ENCODE measurements at regions of chr10 and their contacts with region 1.

Region 1: DNA sequence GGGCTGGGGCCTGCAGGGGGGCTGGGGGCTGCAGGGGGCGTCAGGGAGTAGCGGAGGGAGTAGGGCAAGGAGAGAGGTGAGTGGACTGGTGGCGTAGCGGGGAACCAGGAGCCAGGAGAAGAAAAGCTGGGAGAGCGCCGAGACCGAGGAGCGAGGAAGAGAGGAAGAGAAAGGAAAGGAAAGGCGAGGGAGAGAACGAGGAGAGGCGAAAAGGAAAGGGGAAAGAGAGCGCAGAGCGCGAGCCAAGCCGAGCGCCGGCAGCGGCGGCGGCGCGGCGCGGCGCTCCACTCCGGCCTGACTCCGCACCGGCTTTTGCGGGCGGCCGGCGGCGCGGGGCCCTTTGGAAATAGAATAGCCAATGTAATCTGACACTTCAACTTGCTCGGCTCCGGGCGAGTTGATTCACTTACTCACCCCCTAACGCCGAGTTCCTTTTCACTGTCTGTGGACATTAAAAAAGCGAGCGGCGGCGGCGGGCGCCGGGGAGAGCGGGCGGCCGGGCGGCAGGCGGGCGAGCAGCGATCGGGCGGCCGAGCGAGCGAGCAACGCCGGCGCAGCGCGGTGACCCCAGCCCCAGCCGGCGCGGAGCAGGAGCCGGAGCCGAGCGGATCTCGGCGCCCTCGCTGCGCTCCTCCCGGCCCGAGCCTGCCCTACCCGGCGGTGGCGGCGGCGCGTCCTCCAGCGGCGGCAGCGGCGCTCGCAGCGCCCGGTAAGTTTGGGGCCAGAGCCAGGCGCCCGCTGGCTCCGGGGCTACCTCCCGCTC is at the start of gene ZMIZ1:
- DNase-seq: peak; percentile 78
- ATAC-seq: peak; percentile 66
- H3K4me3 Mint-ChIP-seq: peak within 1 kb of the TSS; percentile 89
- H3K27ac Mint-ChIP-seq: peak within 1 kb of the TSS; percentile 75
- H3K4me1 Mint-ChIP-seq: peaks cover 30% of the 10 kb centered on the region
- H3K27me3 Mint-ChIP-seq: peaks cover 21% of the 10 kb centered on the region
- CTCF ChIP-seq: no peak
- total RNA-seq, gene ZMIZ1: 88.2 and 93.9 TPM in 2 replicates

Region 2: GRCh38 chr10:78029269-78030226 is 1039.2 kb before region 1 on chr10 and contains the start of gene POLR3A:
- CTCF ChIA-PET with region 1: no interaction called
- POLR2A ChIA-PET with region 1: no interaction called
- intact Hi-C with region 1: loop called (anchors 2 kb)
- DNase-seq: peak; percentile 85
- ATAC-seq: peak; percentile 57
- H3K4me3 Mint-ChIP-seq: peak within 1 kb of the TSS; percentile 99
- H3K27ac Mint-ChIP-seq: peak within 1 kb of the TSS; percentile 88
- H3K4me1 Mint-ChIP-seq: peaks cover 43% of the 10 kb centered on the region
- H3K27me3 Mint-ChIP-seq: no peaks in the 10 kb centered on the region
- CTCF ChIP-seq: no peak
- total RNA-seq, gene POLR3A: 17.0 and 20.3 TPM in 2 replicates

Region 3: DNA sequence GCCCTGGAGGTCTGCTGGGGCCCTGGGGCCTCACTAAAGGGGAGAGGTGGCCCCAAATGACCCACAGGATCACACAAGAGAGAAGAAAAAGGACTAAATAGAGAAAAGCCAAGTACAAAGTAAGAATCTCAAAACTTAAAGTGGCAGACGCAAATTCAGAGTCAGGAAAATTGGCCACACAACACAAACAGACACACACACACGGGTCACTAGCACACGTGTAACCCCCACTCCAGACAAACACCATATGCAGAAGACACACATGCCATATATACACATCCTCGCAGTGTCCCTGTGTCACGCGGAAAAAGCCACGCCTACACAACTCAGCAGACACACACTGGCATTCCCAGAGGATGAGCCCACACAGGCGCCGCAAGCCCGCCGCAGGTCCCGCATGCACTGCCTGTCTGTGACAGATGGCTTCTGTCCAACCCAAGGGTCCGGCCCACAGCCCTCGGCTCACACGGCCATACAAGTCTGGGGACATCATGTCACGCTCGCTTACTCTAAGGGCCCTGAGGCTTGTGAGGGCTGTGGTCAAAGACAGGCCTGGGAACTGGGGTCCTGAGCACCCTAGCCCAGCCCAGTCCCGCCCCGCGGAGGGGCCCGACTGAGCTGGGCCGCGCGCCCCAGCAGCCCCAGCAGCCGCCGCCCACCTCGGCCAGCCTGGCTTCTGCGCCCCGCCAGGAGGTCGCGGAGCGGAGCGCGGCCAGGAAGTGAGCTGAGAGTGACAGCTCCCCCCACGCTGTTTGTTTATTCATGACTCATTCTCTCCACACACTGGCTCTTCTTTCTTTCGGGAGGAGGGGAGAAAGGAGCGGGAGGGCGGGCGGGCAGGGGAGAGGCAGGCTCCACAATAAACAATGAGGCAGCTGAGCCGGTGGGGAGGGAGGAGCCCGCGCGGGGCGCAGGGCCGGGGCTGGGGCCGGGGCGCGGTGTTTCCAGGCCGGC is 95.5 kb before region 1 on chr10:
- CTCF ChIA-PET with region 1: no interaction called
- POLR2A ChIA-PET with region 1: no interaction called
- intact Hi-C with region 1: loop called (anchors 1 kb)
- DNase-seq: peak; percentile 41
- ATAC-seq: peak; percentile 61
- H3K4me3 Mint-ChIP-seq: peak overlapping the region; percentile 73
- H3K27ac Mint-ChIP-seq: no peak overlapping the region
- H3K4me1 Mint-ChIP-seq: peaks cover 14% of the 10 kb centered on the region
- H3K27me3 Mint-ChIP-seq: peaks cover 52% of the 10 kb centered on the region
- CTCF ChIP-seq: no peak

Region 4: DNA sequence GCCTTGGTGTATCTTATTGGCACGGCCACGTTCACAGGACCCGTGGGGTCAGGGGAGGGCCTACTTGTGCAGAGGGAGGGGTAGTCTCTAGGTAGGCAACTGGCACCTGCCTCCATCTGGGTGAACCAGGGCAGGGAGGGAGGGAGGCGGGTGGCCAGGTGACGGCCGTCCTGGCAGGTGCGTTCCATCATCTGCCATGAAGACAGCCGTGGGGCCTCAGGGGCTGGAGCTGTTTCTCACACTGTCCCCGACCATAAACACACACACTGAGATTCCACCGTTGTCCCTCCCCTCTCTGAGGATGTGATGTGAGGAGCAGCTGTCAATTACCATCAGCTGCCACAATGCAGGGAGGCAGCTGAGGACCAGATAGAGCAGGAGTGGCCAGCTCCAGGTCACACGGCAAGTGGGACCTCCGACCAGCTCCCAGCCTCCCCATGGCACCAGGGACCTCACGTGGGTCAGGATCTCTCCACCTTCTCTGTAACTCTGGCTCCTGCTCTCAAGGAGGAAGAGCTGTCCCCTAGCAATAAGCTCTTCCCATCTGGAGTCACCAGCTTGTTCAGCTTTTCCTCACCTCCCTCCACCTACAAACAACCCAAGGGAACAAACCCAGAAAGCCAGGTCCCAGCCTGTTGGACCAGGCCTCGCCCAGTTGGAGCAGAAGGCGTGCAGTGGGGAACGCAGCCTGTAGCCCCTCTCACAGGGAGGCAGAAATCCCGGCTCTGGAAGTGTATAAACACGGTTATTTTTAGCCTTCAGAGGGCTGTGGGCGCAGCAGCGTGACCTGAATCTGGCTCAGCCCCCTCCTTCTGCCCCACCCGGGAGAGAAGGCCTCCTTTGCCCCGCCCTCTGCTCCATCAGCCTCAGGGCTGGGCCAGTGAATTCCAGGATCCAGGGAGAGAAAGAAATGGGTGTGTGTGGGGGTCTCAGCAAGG is 33.1 kb after region 1 on chr10:
- CTCF ChIA-PET with region 1: no interaction called
- POLR2A ChIA-PET with region 1: interaction called, 6 read pairs
- intact Hi-C with region 1: loop called (anchors 2 kb)
- DNase-seq: no peak
- ATAC-seq: no peak
- H3K4me3 Mint-ChIP-seq: no peak overlapping the region
- H3K27ac Mint-ChIP-seq: no peak overlapping the region
- H3K4me1 Mint-ChIP-seq: peaks cover 32% of the 10 kb centered on the region
- H3K27me3 Mint-ChIP-seq: peaks cover 31% of the 10 kb centered on the region
- CTCF ChIP-seq: no peak

Region 5: DNA sequence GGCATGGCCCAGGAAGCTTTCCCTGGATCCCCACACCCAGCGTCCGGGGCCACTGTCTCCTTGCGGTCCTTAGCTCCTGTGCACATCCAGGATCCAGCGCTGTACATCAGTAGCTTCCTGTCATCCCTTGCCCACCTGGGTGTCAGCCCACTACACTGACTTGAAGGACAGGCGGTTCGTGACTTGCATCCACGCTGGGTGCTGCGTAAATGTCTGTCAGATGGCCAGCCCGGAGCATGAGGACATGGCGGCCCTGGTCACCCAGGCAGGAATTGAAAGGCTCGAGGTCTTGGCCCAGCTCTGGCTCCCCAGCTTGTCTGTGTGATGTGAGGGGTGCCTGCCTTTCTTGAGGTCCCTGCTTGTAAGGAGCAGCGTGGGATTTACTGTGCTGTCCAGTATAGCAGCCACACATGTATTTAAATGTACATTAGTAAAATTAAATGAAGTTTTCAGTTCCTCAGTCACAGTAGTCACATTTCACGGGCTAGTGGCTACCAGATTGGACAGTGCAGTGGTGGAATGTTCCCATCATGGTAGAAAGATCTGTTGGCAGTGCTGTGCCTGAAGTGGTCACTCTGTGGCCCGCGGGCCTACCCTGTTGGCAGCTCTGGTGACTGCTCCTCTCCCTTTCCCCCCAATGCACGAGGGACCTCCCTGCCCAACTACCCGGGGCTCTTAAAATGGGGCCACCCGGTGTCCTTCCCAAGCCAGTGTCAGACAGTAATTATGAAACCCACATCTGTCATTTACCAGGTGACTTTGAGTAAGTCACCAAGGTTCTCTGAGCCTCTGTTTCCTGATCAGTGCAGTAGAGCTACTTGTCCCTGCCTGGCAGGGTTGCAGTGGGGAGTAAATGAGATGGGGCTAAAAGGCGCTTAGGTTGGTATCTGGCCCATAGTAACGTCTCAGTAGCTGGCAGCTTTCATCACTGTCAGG is 180.7 kb after region 1 on chr10:
- CTCF ChIA-PET with region 1: no interaction called
- POLR2A ChIA-PET with region 1: interaction called, 6 read pairs
- intact Hi-C with region 1: loop called (anchors 2 kb)
- DNase-seq: peak; percentile 68
- ATAC-seq: peak; percentile 57
- H3K4me3 Mint-ChIP-seq: peak overlapping the region; percentile 79
- H3K27ac Mint-ChIP-seq: peak overlapping the region; percentile 98
- H3K4me1 Mint-ChIP-seq: peaks cover 100% of the 10 kb centered on the region
- H3K27me3 Mint-ChIP-seq: no peaks in the 10 kb centered on the region
- CTCF ChIP-seq: no peak

Region 6: DNA sequence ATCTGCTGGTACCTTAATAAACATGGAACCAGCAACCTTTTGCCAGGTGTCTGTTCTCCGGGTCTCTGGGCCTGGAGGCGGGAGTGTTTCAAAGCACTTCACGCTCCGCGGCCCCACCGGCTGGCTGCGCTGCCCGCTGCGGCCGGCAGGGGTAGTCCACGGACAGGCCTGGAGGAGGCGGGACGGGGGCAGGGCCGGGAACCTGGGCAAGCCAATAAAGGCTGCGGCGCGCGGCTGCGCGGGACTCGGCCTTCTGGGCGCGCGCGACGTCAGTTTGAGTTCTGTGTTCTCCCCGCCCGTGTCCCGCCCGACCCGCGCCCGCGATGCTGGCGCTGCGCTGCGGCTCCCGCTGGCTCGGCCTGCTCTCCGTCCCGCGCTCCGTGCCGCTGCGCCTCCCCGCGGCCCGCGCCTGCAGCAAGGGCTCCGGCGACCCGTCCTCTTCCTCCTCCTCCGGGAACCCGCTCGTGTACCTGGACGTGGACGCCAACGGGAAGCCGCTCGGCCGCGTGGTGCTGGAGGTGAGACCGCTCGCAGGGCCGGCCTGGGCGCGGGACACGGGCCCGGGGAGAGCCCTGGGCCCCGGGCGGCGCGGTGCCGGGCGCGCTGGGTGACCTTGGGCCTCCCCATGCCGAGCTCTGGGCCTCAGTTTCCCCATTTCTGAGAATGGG is 278.6 kb after region 1 on chr10 and contains the start of gene PPIF:
- CTCF ChIA-PET with region 1: no interaction called
- POLR2A ChIA-PET with region 1: no interaction called
- intact Hi-C with region 1: loop called (anchors 5 kb)
- DNase-seq: peak; percentile 94
- ATAC-seq: peak; percentile 95
- H3K4me3 Mint-ChIP-seq: peak within 1 kb of the TSS; percentile 84
- H3K27ac Mint-ChIP-seq: peak within 1 kb of the TSS; percentile 90
- H3K4me1 Mint-ChIP-seq: peaks cover 25% of the 10 kb centered on the region
- H3K27me3 Mint-ChIP-seq: no peaks in the 10 kb centered on the region
- CTCF ChIP-seq: peak; percentile 47
- total RNA-seq, gene PPIF: 68.2 and 72.5 TPM in 2 replicates